Activated CD4-positive, alpha-beta T cell treated with anti-CD3 and anti-CD28 coated beads, Interleukin-2, amount 10 ng/mL, durations not matched to agents 24 days and 14 days (primary cell): ENCODE measurements at regions of chr6 and their contacts with region 1.

Region 1: GRCh38 chr6:111873178-111874024 is at the start of gene FYN:
- DNase-seq: peak; percentile 100
- H3K4me3 Mint-ChIP-seq: peak within 1 kb of the TSS; percentile 99
- H3K27ac Mint-ChIP-seq: peak within 1 kb of the TSS; percentile 96
- H3K4me1 Mint-ChIP-seq: peaks cover 34% of the 10 kb centered on the region
- H3K27me3 Mint-ChIP-seq: peaks cover 2% of the 10 kb centered on the region
- total RNA-seq, gene FYN: 331 and 341 TPM in 2 replicates

Region 2: GRCh38 chr6:111259089-111259831 is 614.1 kb before region 1 on chr6:
- intact Hi-C with region 1: loop called (anchors 5 kb)
- DNase-seq: peak; percentile 100
- H3K4me3 Mint-ChIP-seq: peak overlapping the region; percentile 84
- H3K27ac Mint-ChIP-seq: peak overlapping the region; percentile 91
- H3K4me1 Mint-ChIP-seq: peaks cover 26% of the 10 kb centered on the region
- H3K27me3 Mint-ChIP-seq: peaks cover 11% of the 10 kb centered on the region

Region 3: DNA sequence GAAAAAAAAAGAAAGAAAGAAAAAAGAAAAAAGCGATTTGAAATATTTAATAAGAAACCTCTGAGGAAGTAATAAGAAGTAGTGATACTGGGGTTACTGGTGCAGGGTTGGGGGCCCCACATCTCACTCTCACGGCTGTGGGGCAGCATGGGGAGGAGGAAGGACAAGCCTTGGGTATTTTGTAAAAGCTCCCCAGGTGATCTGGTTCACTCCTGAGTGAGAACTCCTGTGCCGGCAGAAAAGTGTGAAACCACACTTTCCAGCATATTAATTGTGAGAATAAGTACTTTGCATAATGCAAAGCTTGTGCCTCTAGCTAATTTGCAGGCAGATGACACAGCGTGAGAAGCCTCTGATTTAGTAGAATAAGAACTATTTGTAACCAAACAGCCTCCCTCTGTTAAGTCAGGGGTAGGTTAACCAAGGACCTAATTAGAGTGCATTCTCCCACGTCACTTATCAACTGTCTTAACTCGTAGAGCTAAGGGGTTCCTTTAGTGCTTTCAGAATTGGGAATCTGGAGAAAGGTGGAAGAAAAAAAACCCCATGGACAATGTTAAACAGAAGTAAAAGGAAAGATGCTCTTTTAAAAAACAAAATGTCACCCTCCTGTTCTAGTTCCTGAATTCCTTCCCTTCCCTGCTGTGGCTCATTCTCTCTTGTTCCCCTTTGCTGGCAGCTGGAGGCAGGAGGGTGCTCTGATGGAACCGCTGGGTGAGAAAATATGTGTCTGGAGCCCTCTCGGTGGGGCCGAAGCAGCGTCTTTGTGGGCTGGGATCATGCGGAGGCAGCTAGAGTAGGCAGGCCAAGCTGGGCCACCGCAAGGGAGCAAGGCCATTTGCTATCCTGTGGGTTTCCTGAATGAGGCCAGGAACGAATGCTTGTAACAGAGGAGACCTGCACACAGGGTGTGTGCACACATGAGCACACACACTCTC is 108.9 kb before region 1 on chr6:
- intact Hi-C with region 1: loop called (anchors 1 kb)
- DNase-seq: peak; percentile 82
- H3K4me3 Mint-ChIP-seq: peak overlapping the region; percentile 57
- H3K27ac Mint-ChIP-seq: peak overlapping the region; percentile 98
- H3K4me1 Mint-ChIP-seq: peaks cover 96% of the 10 kb centered on the region
- H3K27me3 Mint-ChIP-seq: no peaks in the 10 kb centered on the region

Region 4: DNA sequence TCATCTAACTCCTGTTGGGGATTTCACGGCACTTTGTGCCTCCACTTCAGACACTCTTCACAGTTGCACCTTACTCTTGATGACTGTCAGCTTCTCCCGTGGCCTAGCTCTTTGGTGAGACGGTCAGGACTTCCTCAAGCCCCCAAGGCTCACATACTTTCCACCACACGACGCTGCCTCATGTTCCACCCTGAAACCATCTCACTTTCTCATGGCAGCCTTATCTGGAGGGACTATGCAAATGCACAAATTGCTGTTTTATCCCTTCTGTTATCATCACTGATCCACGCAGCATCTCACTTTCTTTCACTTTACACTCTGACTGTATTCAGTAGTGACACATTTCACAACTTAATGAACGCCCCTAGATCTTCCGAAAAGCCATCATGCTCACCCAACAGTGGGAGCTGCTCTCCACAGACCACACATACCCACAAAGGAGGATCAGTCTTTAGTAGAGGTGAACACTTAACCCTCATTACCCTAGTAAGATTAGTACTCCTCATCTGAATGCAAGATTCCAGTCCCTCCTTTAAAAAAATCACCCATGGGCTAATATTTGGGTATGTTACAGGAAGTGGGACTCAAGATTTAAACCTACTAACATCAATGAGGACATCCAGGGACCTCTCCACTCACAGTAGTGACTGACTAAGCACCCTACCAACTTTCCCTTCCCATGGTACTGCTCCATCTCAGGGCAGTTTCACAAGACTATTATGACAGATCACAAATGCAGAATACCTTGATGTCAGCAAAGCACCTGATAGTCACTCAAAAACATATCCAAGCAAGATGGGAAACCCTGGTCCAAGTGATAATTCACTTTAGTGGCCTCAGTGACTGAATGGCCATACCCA is 35.5 kb before region 1 on chr6:
- intact Hi-C with region 1: loop called (anchors 1 kb)
- DNase-seq: peak; percentile 86
- H3K4me3 Mint-ChIP-seq: peak overlapping the region; percentile 75
- H3K27ac Mint-ChIP-seq: peak overlapping the region; percentile 96
- H3K4me1 Mint-ChIP-seq: peaks cover 64% of the 10 kb centered on the region
- H3K27me3 Mint-ChIP-seq: no peaks in the 10 kb centered on the region

Region 5: DNA sequence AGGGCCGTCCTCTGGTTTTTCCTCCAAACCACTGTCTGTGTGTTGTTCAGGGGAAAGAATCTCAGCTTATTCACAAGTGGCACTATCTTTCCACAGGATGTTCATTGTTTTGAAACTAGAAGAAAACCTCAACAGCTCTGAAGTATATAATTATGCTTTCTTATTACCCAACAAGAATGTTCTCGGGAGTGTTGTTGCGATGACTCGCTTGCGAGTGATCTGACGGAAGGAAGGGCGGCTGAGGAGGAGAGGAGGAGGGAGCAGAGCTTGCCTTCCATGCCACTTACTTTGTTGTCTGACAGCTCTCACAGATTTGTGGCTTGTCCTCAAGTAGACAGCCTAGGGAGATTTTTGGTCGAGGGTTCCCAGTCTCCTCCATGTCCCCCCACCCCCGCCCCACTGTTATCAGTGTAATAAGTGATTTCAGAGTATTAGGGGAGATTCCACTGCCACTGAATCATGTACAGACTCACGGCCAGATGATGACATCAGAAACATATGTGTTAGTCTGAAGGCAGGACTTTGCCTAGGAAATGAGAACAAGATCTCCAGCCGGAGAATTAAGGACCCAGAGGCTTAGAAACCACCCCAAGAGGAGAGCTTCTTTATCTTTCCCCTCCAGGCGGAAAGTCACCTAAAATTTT is 99.8 kb after region 1 on chr6:
- intact Hi-C with region 1: loop called (anchors 1 kb)
- DNase-seq: peak; percentile 86
- H3K4me3 Mint-ChIP-seq: peak overlapping the region; percentile 73
- H3K27ac Mint-ChIP-seq: peak overlapping the region; percentile 86
- H3K4me1 Mint-ChIP-seq: peaks cover 51% of the 10 kb centered on the region
- H3K27me3 Mint-ChIP-seq: peaks cover 7% of the 10 kb centered on the region

Region 6: DNA sequence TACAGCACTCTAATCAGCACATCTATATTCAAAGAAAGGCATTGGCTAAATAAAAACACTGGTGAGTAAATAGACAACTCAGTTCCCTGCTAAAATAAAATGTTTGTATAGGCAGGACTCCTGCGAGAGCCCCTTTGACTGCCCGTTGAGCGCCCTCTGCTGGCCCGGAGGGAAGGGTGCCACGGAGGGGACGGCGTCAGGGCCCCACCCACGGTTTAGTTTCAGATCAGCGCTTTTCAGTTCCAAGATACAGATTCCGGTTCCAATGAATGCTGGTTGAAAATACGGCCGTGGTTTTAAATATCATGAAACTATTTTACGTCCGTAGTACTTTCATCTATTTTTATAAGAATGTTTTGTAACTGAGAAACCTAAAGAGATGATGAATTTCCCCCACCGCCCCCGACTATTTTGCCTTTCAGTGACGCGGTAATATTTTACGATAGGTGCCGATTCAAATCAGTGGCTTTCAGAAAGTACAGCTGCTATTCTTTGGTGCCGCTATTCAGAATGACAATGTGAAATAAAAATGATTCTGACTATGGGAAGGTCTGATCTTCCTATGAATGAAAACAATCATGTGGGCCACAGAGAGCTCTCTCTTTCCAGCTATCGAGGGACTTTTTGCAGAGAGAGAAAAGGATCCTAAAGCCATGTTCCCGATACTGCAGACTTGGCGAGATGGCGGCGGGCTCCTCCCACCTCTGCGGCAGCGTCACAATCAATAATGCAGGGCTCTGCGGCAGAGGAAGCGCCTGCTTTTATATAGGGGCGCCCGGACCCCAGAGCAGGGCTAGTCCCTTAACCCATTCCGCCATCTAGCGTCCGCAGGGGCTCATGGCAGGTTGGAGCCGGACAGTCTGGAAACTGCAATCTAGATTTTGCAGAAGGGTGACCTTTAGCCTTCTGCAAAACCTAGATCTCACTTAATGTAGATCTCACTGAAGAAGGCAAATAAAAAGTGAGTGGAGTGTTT is 169.9 kb after region 1 on chr6:
- intact Hi-C with region 1: loop called (anchors 1 kb)
- DNase-seq: peak; percentile 97
- H3K4me3 Mint-ChIP-seq: peak overlapping the region; percentile 93
- H3K27ac Mint-ChIP-seq: peak overlapping the region; percentile 96
- H3K4me1 Mint-ChIP-seq: peaks cover 24% of the 10 kb centered on the region
- H3K27me3 Mint-ChIP-seq: no peaks in the 10 kb centered on the region